ENCODE measurements at regions of chr14 and their contacts with region 1.

Region 1: GRCh38 chr14:92106143-92106926 is at the start of gene ATXN3:
- DNase-seq: peak; percentile 99
- H3K4me3 ChIP-seq: peak within 1 kb of the TSS; percentile 76 to 100 (median 83)
- H3K27ac ChIP-seq: peak within 1 kb of the TSS; percentile 89 to 99 (median 95)
- H3K4me1 ChIP-seq: peaks cover 36 to 48% (median 44%) of the 10 kb centered on the region in 4 donors
- H3K27me3 ChIP-seq: no peaks in the 10 kb centered on the region
- CTCF ChIP-seq: peak; percentile 81 to 88 (median 82)
- EP300 ChIP-seq: no peak
- POLR2A ChIP-seq: peak; percentile 30
- total RNA-seq, gene ATXN3: 24.1 to 48.9 (median 24.9) TPM

Region 2: GRCh38 chr14:92014040-92014439 is 92.3 kb before region 1 on chr14:
- intact Hi-C with region 1: no loop called
- DNase-seq: no peak
- H3K4me3 ChIP-seq: no peak overlapping the region
- H3K27ac ChIP-seq: no peak overlapping the region
- H3K4me1 ChIP-seq: no peaks in the 10 kb centered on the region
- H3K27me3 ChIP-seq: no peaks in the 10 kb centered on the region
- CTCF ChIP-seq: no peak
- EP300 ChIP-seq: no peak
- POLR2A ChIP-seq: no peak

Region 3: GRCh38 chr14:92039719-92040430 is 66.5 kb before region 1 on chr14 and contains the start of gene TRIP11:
- intact Hi-C with region 1: loop called (anchors 5 kb)
- DNase-seq: peak; percentile 94
- H3K4me3 ChIP-seq: peak within 1 kb of the TSS; percentile 77 to 92 (median 88)
- H3K27ac ChIP-seq: peak within 1 kb of the TSS; percentile 94 to 98 (median 96)
- H3K4me1 ChIP-seq: peaks cover 21 to 53% (median 48%) of the 10 kb centered on the region in 4 donors
- H3K27me3 ChIP-seq: no peaks in the 10 kb centered on the region
- CTCF ChIP-seq: no peak
- EP300 ChIP-seq: no peak
- POLR2A ChIP-seq: peak; percentile 47
- total RNA-seq, gene TRIP11: 24.0 to 36.2 (median 29.6) TPM

Region 4: GRCh38 chr14:92185559-92185958 is 79.2 kb after region 1 on chr14:
- intact Hi-C with region 1: no loop called
- DNase-seq: no peak
- H3K4me3 ChIP-seq: no peak overlapping the region
- H3K27ac ChIP-seq: no peak overlapping the region
- H3K4me1 ChIP-seq: no peaks in the 10 kb centered on the region
- H3K27me3 ChIP-seq: no peaks in the 10 kb centered on the region
- CTCF ChIP-seq: no peak
- EP300 ChIP-seq: no peak
- POLR2A ChIP-seq: no peak